Psoas muscle (tissue), 8 donors: ENCODE measurements at regions of chr3 and their contacts with region 1.

Region 1: DNA sequence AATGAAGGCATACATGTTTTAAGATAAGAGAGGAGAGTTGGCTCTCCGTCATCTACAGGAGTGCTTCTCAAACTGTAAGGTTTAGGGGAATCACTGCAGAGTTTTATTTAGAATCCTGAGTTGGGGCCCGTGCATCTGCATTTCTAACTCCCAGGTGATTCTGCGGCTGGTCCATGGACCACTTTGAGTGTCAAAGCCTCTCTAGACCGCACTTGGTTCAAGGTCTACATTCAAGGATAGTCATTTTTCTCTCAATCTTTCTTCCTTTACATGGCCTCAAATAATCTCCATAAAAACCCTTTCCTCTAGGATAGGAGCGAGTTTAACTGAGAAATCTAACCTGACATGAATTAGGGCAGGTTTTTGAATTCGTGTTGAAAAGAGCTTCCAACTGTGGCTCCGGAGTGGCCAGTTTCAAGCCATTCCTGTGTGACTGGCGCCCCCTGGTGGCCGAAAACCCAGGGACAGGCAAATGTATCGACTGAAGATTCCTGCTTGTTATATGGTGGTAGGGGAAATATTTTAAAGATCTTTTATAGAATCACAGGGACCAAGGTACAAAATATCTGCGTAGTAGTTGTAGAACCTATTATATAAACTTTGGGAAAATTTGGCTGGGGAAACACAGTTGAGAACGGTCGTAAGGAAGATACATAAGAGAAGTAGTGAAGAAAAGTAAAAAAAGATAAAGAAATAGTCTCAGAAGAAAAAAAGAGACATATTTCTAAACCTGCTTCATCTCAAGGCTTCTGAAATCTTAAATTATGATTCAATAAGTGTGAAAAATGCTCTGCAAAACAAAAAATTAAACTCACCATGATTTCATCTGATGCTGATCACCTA is 11.9 kb downstream of the GABRR3 start:
- DNase-seq: peak; percentile 90 to 93
- ATAC-seq: peak; percentile 75 to 92 (median 83)
- H3K4me3 ChIP-seq: no peak overlapping the region
- H3K27ac ChIP-seq: no peak overlapping the region
- H3K4me1 ChIP-seq: peaks cover 14% of the 10 kb centered on the region
- H3K27me3 ChIP-seq: no peaks in the 10 kb centered on the region
- CTCF ChIP-seq: peak; percentile 99

Region 2: GRCh38 chr3:97940034-97940433 is 83.2 kb before region 1 on chr3:
- intact Hi-C with region 1: no loop called
- DNase-seq: no peak
- ATAC-seq: no peak
- H3K4me3 ChIP-seq: no peak overlapping the region
- H3K27ac ChIP-seq: no peak overlapping the region
- H3K4me1 ChIP-seq: no peaks in the 10 kb centered on the region
- H3K27me3 ChIP-seq: no peaks in the 10 kb centered on the region
- CTCF ChIP-seq: peak; percentile 7

Region 3: DNA sequence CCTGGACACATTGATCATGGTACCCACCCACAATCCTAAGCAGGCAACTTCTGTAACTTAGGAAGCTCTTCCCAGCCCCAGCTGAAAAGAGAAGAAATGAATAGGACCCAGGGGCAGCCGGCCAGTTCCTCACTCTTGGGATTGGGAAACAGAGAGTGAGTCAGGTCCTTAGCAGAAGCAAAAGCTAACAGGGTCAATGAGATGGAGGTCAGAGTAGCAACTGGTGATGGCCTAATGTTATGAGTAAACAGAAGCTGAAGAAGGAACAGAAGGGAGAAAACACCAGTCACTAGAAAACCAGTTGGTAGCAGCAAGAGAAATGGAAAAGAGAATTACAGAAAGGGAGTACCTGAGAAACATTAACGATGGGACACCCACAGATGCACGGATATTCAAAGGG is 70.9 kb before region 1 on chr3:
- intact Hi-C with region 1: loop called in 1 of 2 experiments (anchors 10 kb)
- DNase-seq: peak; percentile 76 to 85
- ATAC-seq: peak; percentile 87 to 96 (median 94)
- H3K4me3 ChIP-seq: no peak overlapping the region
- H3K27ac ChIP-seq: peak overlapping the region; percentile 86
- H3K4me1 ChIP-seq: peaks cover 35% of the 10 kb centered on the region
- H3K27me3 ChIP-seq: no peaks in the 10 kb centered on the region
- CTCF ChIP-seq: no peak

Region 4: DNA sequence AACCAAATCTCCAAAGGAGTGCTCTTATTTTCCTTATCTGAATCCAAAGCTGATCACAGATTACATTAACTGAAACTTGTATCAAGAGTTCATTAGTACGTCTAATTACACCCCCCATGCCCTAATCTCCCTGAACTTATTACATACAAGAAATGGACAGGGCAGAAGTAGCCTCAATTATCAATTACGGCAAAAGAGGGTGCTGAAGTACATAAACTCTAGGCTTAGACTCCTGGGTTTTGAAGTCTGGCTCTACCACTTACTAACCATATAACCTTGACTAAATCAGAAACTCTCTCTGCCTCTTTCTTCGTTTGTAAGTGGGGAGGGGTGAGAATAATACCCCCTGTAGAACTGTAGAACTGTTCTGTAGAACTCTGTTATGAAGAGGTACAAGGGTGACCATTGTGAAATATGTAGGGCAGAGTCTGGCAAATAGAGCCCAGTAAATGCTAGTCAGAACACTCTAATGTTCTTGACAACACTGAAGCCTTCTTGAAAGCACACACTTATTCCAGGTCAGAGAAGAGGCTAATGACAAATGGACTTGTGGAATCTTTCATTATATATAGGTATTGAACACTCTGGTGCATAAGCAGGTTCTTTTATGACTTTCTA is 310.9 kb after region 1 on chr3:
- intact Hi-C with region 1: no loop called
- DNase-seq: no peak
- ATAC-seq: no peak
- H3K4me3 ChIP-seq: no peak overlapping the region
- H3K27ac ChIP-seq: no peak overlapping the region
- H3K4me1 ChIP-seq: no peaks in the 10 kb centered on the region
- H3K27me3 ChIP-seq: peaks cover 0 to 3% (median 0%) of the 10 kb centered on the region in 3 donors
- CTCF ChIP-seq: no peak

Region 5: DNA sequence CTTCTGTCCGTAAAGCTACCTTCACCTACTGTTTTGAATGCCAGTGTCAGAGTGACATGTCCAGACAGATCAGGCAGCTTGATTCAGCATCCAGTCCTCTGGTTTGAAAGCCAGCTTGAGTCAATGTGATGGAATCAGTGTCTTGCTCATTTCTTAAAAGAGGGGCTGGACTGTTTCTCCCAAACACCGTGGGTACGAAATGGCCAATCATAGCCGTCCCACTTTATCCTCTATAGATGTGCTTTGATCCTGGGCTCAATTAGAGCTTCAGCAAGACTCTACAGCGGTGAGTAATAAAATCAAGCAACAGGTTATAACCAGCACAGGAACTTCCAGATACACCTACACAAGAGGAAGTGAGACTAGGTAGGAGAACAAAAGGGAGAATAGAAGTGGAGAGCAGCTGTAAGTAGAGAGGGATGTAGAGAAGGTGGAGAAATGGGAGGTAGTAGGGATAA is 422.8 kb after region 1 on chr3:
- intact Hi-C with region 1: no loop called
- DNase-seq: no peak
- ATAC-seq: no peak
- H3K4me3 ChIP-seq: no peak overlapping the region
- H3K27ac ChIP-seq: no peak overlapping the region
- H3K4me1 ChIP-seq: no peaks in the 10 kb centered on the region
- H3K27me3 ChIP-seq: no peaks in the 10 kb centered on the region
- CTCF ChIP-seq: no peak